GM12878 (cell line): ENCODE measurements at regions of chr4 and their contacts with region 1.

Region 1: GRCh38 chr4:26964512-26964911 is 103.9 kb downstream of the STIM2 start:
- DNase-seq: no peak
- ATAC-seq: peak; percentile 34; the same call in 2 of the 3 replicates
- H3K4me3 ChIP-seq: no peak overlapping the region
- H3K27ac ChIP-seq: no peak overlapping the region
- H3K4me1 ChIP-seq: peaks cover 6% of the 10 kb centered on the region; the same call in 1 of the 2 replicates
- H3K27me3 ChIP-seq: no peaks in the 10 kb centered on the region
- CTCF ChIP-seq: no peak
- EP300 ChIP-seq: no peak
- POLR2A ChIP-seq: no peak
- RAD21 ChIP-seq: no peak

Region 2: DNA sequence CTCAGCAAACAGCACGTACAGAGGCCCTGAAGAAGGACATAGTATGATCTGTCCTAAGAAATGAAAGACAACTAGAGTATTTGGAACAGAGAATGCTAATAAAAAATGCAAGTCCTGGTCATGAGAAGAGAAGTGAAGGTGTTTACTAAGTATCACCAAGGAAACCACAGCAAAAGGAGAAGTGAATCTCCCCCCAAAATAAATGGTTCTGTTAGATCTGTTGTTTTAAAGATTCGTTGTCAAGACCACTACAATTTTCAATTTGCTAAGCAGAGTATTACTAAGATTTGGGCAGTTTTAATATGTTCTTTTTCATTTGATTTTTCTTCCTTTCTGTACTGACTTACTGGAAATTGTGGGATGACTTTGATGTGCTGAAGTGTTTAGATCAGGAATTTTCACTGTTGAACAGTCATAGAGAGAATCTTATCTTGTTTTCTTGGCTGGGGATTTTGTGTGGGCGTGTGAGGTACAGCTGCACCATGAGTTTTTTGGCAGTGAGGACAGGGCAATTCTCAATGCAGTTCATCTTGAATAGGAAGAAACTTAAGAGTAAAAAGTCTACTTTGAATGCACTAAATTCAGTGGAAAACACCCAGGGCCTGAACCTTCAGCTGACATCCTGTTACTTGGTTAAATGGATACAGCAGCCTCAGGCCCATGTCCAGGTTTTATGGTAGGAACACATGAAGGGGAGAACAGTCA is 28.3 kb after region 1 on chr4:
- CTCF ChIA-PET with region 1: no interaction called
- POLR2A ChIA-PET with region 1: no interaction called
- RAD21 ChIA-PET with region 1: interaction called, 14 read pairs
- SMC1A ChIA-PET with region 1: interaction called, 10 read pairs
- in situ Hi-C with region 1: no loop called
- intact Hi-C with region 1: no loop called
- DNase-seq: peak; percentile 72
- ATAC-seq: peak; percentile 94
- H3K4me3 ChIP-seq: peak overlapping the region; percentile 39; the same call in 1 of the 2 replicates
- H3K27ac ChIP-seq: peak overlapping the region; percentile 89
- H3K4me1 ChIP-seq: peaks cover 21% of the 10 kb centered on the region
- H3K27me3 ChIP-seq: no peaks in the 10 kb centered on the region
- CTCF ChIP-seq: no peak
- EP300 ChIP-seq: peak; percentile 78 to 84
- POLR2A ChIP-seq: no peak
- RAD21 ChIP-seq: no peak